Activated CD4-positive, alpha-beta T cell treated with anti-CD3 and anti-CD28 coated beads for 36 hours (primary cell): ENCODE measurements at regions of chr20 and their contacts with region 1.

Region 1: DNA sequence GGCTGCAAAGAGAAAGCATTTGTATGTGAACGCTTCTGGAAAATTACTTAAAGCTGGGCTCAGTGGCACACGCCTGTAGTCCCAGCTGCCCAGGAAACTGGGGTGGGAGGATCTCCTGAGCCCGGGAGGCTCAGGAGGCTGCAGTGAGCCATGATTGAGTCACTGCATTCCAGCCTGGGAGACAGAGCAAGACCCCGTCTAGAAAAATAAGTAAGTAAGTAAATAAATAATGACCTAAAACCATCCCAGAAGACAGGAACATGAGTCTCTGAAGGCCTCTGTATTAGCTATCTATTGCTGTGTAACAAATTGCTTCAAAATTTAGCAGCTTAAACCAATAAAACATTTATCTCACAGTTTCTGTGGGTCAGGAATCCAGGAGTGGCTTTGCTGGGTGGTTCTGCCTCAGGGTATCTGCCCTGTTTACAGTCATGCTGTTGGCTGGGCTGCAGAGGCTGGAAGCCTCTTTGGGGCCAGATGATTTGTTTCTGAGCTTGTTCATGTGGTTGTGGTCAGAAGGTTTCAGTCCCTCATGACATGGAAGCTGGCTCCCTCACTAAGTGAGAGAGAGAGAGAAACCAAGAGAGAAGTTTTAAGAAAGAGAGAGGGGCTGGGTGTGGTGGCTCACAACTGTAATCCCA is 48.4 kb upstream of the NCOA3 start:
- DNase-seq: peak; percentile 74
- ATAC-seq: peak; percentile 84
- H3K4me3 Mint-ChIP-seq: no peak overlapping the region
- H3K27ac Mint-ChIP-seq: peak overlapping the region; percentile 73
- H3K4me1 Mint-ChIP-seq: peaks cover 38% of the 10 kb centered on the region
- H3K27me3 Mint-ChIP-seq: no peaks in the 10 kb centered on the region

Region 2: GRCh38 chr20:45752746-45753145 is 1700.5 kb before region 1 on chr20:
- CTCF ChIA-PET with region 1: no interaction called
- POLR2A ChIA-PET with region 1: no interaction called
- intact Hi-C with region 1: loop called in 1 of 2 experiments (anchors 5 kb)
- DNase-seq: peak; percentile 51
- ATAC-seq: peak; percentile 76
- H3K4me3 Mint-ChIP-seq: no peak overlapping the region
- H3K27ac Mint-ChIP-seq: peak overlapping the region; percentile 63
- H3K4me1 Mint-ChIP-seq: peaks cover 28% of the 10 kb centered on the region
- H3K27me3 Mint-ChIP-seq: peaks cover 21% of the 10 kb centered on the region

Region 3: GRCh38 chr20:47418061-47418912 is 35.0 kb before region 1 on chr20:
- CTCF ChIA-PET with region 1: no interaction called
- POLR2A ChIA-PET with region 1: interaction called, 5 read pairs
- intact Hi-C with region 1: loop called in 1 of 2 experiments (anchors 5 kb)
- DNase-seq: no peak
- ATAC-seq: no peak
- H3K4me3 Mint-ChIP-seq: no peak overlapping the region
- H3K27ac Mint-ChIP-seq: no peak overlapping the region
- H3K4me1 Mint-ChIP-seq: peaks cover 16% of the 10 kb centered on the region
- H3K27me3 Mint-ChIP-seq: no peaks in the 10 kb centered on the region

Region 4: GRCh38 chr20:47432211-47433210 is 20.8 kb before region 1 on chr20:
- CTCF ChIA-PET with region 1: no interaction called
- POLR2A ChIA-PET with region 1: no interaction called
- intact Hi-C with region 1: no loop called
- DNase-seq: no peak
- ATAC-seq: no peak
- H3K4me3 Mint-ChIP-seq: no peak overlapping the region
- H3K27ac Mint-ChIP-seq: no peak overlapping the region
- H3K4me1 Mint-ChIP-seq: no peaks in the 10 kb centered on the region
- H3K27me3 Mint-ChIP-seq: no peaks in the 10 kb centered on the region

Region 5: DNA sequence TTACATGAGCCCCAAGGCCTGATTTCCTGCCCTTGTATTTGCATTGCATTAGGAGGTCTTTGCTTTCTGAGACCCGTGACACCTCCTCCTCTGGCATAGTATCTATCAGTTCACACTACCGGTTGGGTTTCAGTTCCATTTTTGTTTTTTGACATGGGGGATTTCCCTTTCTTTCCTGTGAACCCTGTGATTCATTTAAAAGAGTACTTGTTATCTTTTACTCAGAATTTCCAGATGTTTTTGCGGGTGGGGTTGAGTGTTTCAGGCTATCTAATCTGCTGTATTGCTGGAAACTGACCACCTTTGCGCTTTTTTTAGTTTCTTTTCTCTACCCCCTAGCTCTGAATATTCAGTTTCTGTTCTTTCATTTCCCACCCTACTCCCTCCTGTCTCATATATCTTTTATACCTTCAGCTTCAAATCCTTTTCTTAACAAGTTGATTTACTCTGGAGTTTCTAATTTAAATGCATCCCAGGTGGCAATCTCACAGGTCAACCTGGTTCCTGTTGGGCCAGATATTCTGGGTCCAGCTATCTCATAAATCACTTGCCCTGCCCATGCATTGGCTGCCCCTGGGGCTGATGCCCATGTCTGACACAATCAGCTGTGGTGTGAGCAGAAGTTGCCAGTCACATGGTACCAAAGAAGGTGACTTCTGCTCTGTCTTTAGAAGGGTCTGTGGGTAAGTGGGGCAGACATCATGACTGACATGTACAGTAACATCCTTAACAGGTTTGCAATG is 34.1 kb after region 1 on chr20:
- CTCF ChIA-PET with region 1: interaction called, 13 read pairs
- POLR2A ChIA-PET with region 1: interaction called, 10 read pairs
- intact Hi-C with region 1: loop called (anchors 1 kb)
- DNase-seq: peak; percentile 78
- ATAC-seq: peak; percentile 88
- H3K4me3 Mint-ChIP-seq: peak overlapping the region; percentile 26
- H3K27ac Mint-ChIP-seq: peak overlapping the region; percentile 99
- H3K4me1 Mint-ChIP-seq: peaks cover 80% of the 10 kb centered on the region
- H3K27me3 Mint-ChIP-seq: no peaks in the 10 kb centered on the region

Region 6: GRCh38 chr20:47610247-47610944 is 157.1 kb after region 1 on chr20:
- CTCF ChIA-PET with region 1: interaction called, 3 read pairs
- POLR2A ChIA-PET with region 1: interaction called, 3 read pairs
- intact Hi-C with region 1: loop called in 1 of 2 experiments (anchors 1 kb)
- DNase-seq: peak; percentile 93
- ATAC-seq: peak; percentile 90
- H3K4me3 Mint-ChIP-seq: peak overlapping the region; percentile 46
- H3K27ac Mint-ChIP-seq: peak overlapping the region; percentile 90
- H3K4me1 Mint-ChIP-seq: peaks cover 82% of the 10 kb centered on the region
- H3K27me3 Mint-ChIP-seq: no peaks in the 10 kb centered on the region